Activated T-helper 1 cell treated with anti-CD3 and anti-CD28 coated beads, Interleukin-12 subunit alpha, Interleukin-12 subunit beta, Interleukin-2, Interleukin-4 antibody, amounts not matched to agents 30 ng/mL and 10 ng/mL and 1 ng/mL, durations not matched to agents 14 hours and 24 hours and 36 hours (primary cell): ENCODE measurements at regions of chrX and their contacts with region 1.

Region 1: DNA sequence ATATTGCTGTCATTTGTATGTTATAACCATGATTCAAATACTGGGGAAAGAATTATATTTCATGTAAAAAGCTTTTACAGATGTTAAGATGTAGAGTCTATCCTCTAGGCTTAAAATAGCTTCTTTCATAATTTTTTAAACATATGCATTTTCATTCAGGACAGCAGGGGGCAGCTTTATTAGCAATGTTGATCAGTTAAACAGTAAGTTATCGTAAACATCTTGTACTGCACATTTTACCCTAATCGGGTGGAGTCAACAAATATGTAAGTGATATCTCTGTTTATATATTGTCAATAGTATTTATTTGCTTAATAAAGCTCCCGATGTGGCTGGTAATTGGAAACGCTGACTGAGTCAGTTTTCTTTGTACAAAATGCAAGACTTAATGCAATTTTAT is 142.5 kb upstream of the MED14 start:
- DNase-seq: no peak
- H3K4me3 Mint-ChIP-seq: no peak overlapping the region
- H3K27ac Mint-ChIP-seq: no peak overlapping the region
- H3K4me1 Mint-ChIP-seq: no peaks in the 10 kb centered on the region
- H3K27me3 Mint-ChIP-seq: peaks cover 2% of the 10 kb centered on the region

Region 2: DNA sequence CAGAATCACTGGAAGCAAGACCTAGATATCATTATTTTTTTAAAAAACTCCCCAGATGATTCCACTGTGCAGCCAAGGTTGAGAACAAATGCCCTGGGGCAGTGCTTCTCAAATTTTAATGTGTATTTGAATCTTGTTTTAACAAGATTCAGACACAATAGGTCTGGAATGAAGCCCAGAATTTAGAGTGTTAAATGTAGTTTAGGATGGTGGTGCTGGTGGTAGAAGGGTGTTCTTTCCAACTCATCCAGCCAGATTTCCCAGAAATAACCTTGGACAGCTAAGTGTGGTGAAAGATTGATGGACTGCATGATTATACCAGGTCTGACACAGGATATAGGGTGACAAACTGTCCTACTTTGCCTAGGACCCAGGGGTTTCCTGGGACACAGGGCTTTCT is 22.5 kb before region 1 on chrX:
- intact Hi-C with region 1: no loop called
- DNase-seq: no peak
- H3K4me3 Mint-ChIP-seq: no peak overlapping the region
- H3K27ac Mint-ChIP-seq: no peak overlapping the region
- H3K4me1 Mint-ChIP-seq: no peaks in the 10 kb centered on the region
- H3K27me3 Mint-ChIP-seq: peaks cover 2% of the 10 kb centered on the region

Region 3: DNA sequence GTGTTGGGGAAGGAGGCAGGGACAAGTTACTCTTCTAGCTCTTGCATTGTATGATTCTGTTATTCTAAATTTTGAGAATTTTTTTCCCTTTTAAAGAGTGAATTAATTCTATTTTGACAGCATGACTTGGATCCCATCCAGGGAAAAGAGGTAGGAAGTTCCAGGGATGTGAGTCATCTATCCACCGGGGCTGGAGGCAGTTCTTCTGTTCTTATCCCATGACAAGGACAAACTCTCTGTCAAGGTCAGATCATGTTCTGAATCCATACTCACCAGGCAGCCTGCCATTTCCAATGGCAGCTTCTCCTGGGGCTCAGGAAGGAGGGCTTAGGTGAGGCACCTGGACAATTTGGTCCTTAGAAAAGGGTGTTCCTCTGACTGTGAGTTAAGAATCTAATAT is 10.5 kb before region 1 on chrX:
- intact Hi-C with region 1: no loop called
- DNase-seq: no peak
- H3K4me3 Mint-ChIP-seq: no peak overlapping the region
- H3K27ac Mint-ChIP-seq: no peak overlapping the region
- H3K4me1 Mint-ChIP-seq: peaks cover 5% of the 10 kb centered on the region
- H3K27me3 Mint-ChIP-seq: peaks cover 6% of the 10 kb centered on the region

Region 4: GRCh38 chrX:40897718-40898270 is 19.9 kb after region 1 on chrX:
- intact Hi-C with region 1: no loop called
- DNase-seq: no peak
- H3K4me3 Mint-ChIP-seq: no peak overlapping the region
- H3K27ac Mint-ChIP-seq: no peak overlapping the region
- H3K4me1 Mint-ChIP-seq: no peaks in the 10 kb centered on the region
- H3K27me3 Mint-ChIP-seq: no peaks in the 10 kb centered on the region

Region 5: GRCh38 chrX:41064028-41064427 is 186.1 kb after region 1 on chrX:
- intact Hi-C with region 1: no loop called
- DNase-seq: no peak
- H3K4me3 Mint-ChIP-seq: no peak overlapping the region
- H3K27ac Mint-ChIP-seq: no peak overlapping the region
- H3K4me1 Mint-ChIP-seq: no peaks in the 10 kb centered on the region
- H3K27me3 Mint-ChIP-seq: peaks cover 2% of the 10 kb centered on the region

Region 6: GRCh38 chrX:41258226-41258625 is 380.3 kb after region 1 on chrX:
- intact Hi-C with region 1: loop called (anchors 2 kb)
- DNase-seq: no peak
- H3K4me3 Mint-ChIP-seq: no peak overlapping the region
- H3K27ac Mint-ChIP-seq: no peak overlapping the region
- H3K4me1 Mint-ChIP-seq: peaks cover 4% of the 10 kb centered on the region
- H3K27me3 Mint-ChIP-seq: peaks cover 6% of the 10 kb centered on the region